ENCODE measurements at regions of chr2 and their contacts with region 1.

Region 1: DNA sequence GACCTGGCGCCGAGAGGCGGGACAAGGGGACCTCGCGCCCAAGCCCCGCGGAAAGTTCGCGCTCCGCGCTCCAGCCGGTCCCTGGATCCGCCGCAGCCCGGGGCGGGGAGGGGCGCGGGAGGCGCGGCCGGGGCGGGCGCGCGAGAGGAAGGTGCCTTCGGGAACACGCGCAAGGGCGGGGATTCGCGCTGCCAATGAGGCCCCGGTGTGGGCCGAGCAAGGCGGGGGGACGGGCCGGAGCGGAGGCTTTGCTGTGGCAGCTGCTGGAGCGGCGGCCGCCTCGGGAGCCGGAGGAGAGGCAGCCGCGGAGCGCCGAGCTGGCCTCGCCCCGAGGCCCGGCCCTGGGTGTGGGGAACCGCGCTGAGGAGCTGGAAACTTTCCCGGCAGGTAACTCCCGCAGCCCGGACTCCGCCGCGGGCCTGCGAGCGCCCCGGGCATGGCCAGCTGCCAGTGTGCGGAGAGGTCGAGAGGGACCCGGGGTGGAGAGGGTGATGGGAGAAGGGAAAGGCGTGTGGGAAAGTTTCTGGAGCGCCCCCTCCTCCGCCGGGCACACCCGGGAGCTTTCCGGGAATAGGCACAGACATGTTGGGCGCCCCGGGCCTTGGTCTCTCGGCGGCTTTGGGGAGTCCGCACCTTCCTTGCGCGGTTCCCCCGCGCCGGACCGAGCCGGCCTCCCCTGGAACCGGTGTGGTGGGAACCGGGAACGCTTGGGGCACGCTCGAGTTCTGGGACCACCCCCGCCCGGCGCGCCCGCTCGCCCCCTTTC is at the start of gene TANC1:
- DNase-seq: peak; percentile 95
- H3K4me3 ChIP-seq: peak within 1 kb of the TSS; percentile 53 to 74
- H3K27ac ChIP-seq: peak within 1 kb of the TSS; percentile 91 to 92
- H3K4me1 ChIP-seq: no peaks in the 10 kb centered on the region
- H3K27me3 ChIP-seq: no peaks in the 10 kb centered on the region
- CTCF ChIP-seq: peak in 1 of 4 experiments; percentile 4
- POLR2A ChIP-seq: peak; percentile 98
- total RNA-seq, gene TANC1: 33.5 to 39.7 TPM

Region 2: DNA sequence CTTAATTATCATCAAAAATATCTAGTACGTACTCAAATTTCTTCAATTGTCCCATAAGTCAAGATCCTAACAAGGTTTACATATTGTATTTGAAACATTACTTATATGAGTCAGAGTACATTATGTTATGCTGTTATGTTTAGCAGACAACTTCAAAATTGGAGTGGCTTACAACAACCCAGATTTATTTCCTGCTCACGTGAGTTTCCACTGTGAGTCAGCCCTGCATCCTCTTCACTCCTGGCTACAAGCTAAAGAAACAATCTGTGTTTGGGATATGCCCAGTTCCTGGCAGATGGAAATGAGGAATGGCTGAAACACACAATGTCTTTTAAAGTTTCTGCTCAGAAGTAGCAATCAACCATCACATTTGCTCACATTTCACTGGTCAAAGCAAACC is 31.6 kb before region 1 on chr2:
- intact Hi-C with region 1: no loop called
- DNase-seq: no peak
- H3K4me3 ChIP-seq: no peak overlapping the region
- H3K27ac ChIP-seq: no peak overlapping the region
- H3K4me1 ChIP-seq: no peaks in the 10 kb centered on the region
- H3K27me3 ChIP-seq: no peaks in the 10 kb centered on the region
- CTCF ChIP-seq: no peak
- POLR2A ChIP-seq: no peak

Region 3: DNA sequence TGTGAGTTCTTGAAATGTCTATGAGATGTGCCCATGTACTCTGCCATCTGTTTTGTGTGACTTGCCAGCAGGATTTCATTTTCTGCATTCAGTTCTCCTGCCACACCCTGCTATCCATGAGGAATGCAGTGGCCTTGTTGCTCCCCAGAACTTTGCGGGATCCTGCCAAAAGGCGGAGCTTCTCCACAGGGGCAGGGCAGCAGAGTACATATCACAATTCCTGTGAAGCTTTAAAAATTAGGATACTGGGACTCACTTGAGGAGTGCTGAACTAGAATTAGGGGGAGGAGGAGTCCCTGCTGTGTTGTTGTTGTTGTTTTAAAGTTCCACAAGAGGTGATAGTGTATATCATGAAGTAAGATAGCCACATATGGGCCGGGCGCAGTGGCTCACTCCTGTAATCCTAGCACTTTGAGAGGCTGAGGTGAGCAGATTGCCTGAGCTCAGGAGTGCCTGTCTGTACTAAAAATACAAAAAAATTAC is 76.3 kb after region 1 on chr2:
- intact Hi-C with region 1: loop called (anchors 10 kb)
- DNase-seq: no peak
- H3K4me3 ChIP-seq: no peak overlapping the region
- H3K27ac ChIP-seq: peak overlapping the region; percentile 68 to 71
- H3K4me1 ChIP-seq: peaks cover 33% of the 10 kb centered on the region
- H3K27me3 ChIP-seq: no peaks in the 10 kb centered on the region
- CTCF ChIP-seq: no peak
- POLR2A ChIP-seq: no peak

Region 4: DNA sequence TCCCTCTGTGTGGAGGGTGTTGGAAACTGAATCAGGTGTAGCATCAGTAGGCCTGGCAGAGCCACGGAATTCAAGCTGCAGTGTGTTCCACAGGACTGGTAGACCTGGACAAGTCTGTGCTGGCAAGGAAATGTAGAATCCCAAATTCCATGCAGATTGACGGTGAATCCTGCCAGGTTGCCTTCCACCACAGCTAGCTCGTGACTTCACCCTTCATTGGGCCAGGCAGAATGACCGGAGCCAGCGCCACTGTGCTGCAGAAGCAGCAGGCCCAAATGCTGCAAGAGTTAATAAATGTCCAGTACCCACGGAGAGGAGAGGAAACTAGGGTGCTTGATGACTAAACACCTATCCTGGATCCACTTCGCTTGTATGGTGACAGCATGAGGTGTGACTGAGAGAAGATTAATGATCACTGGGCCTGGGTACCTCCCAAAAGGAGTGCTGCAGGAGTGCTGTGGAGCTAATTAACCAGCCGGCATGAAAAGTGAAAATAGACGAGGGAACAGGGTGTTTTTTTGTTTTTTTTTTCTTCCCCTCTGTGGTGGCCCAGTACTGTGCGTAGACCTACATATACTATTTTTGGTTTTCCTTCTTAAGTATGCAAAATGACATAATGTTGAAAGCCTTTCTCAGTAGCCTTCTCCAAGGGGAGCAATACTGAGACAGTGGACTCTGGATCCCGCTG is 122.1 kb after region 1 on chr2:
- intact Hi-C with region 1: loop called (anchors 5 kb)
- DNase-seq: peak; percentile 67
- H3K4me3 ChIP-seq: no peak overlapping the region
- H3K27ac ChIP-seq: peak overlapping the region; percentile 50 to 62
- H3K4me1 ChIP-seq: peaks cover 45% of the 10 kb centered on the region
- H3K27me3 ChIP-seq: no peaks in the 10 kb centered on the region
- CTCF ChIP-seq: no peak
- POLR2A ChIP-seq: no peak

Region 5: GRCh38 chr2:159118115-159118858 is 149.7 kb after region 1 on chr2:
- intact Hi-C with region 1: loop called (anchors 2 kb)
- DNase-seq: peak; percentile 87
- H3K4me3 ChIP-seq: no peak overlapping the region
- H3K27ac ChIP-seq: peak overlapping the region in 1 of 2 donors; percentile 4
- H3K4me1 ChIP-seq: peaks cover 4% of the 10 kb centered on the region
- H3K27me3 ChIP-seq: no peaks in the 10 kb centered on the region
- CTCF ChIP-seq: peak; percentile 80 to 97 (median 94)
- POLR2A ChIP-seq: no peak